ENCODE measurements at regions of chr1 and their contacts with region 1.

Region 1: DNA sequence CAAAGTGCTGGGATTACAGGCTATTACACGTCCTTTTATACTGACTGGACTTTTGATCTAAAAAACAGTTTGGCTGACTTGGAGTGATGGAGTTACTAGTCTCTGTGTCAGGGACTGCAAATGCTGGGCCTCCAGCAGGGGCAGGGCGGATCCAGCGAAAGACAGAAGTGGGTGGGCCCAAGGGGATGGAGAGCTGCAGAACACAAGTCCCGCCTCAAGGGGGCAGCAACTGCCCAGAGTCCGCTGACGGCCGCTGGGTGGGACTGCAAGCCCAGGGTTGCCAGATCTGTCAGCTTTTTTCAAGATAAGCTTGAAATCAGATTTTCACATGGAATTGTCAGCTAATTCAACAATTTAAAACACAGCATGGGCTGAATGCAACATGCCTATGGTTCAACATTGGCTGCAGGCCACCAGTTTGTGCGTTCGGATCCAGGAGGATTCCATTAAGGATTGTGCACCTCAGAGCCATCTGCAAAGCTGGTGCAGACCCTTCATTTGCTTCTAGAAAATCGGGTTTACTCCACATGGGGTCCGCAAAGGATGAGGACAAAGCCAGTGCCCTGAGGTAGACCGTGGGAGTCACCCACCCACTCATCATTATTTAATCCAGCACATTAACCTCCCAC is 10.7 kb downstream of the STMN1 start:
- DNase-seq: peak; percentile 97
- H3K4me3 ChIP-seq: peak overlapping the region in 1 of 8 donors; percentile 19
- H3K27ac ChIP-seq: peak overlapping the region in 2 of 8 donors; percentile 38 to 48
- H3K4me1 ChIP-seq: peaks cover 9 to 38% (median 13%) of the 10 kb centered on the region in 6 donors
- H3K27me3 ChIP-seq: no peaks in the 10 kb centered on the region
- CTCF ChIP-seq: peak; percentile 98 to 100 (median 99)
- POLR2A ChIP-seq: no peak

Region 2: GRCh38 chr1:25997828-25998761 is 102.6 kb after region 1 on chr1 and contains the start of gene PAFAH2:
- intact Hi-C with region 1: loop called (anchors 2 kb)
- DNase-seq: peak; percentile 98
- H3K4me3 ChIP-seq: peak within 1 kb of the TSS; percentile 47 to 81 (median 60)
- H3K27ac ChIP-seq: peak within 1 kb of the TSS; percentile 82 to 96 (median 92)
- H3K4me1 ChIP-seq: peaks cover 15 to 40% (median 27%) of the 10 kb centered on the region in 6 donors
- H3K27me3 ChIP-seq: no peaks in the 10 kb centered on the region
- CTCF ChIP-seq: peak; percentile 98 to 100 (median 100)
- POLR2A ChIP-seq: peak in 2 of 3 donors; percentile 3 to 63
- total RNA-seq, gene PAFAH2: 12.9 to 19.7 (median 13.9) TPM

Region 3: GRCh38 chr1:26035959-26036755 is 140.7 kb after region 1 on chr1:
- intact Hi-C with region 1: no loop called
- DNase-seq: peak; percentile 95
- H3K4me3 ChIP-seq: peak overlapping the region; percentile 69 to 97 (median 84)
- H3K27ac ChIP-seq: peak overlapping the region; percentile 80 to 92 (median 86)
- H3K4me1 ChIP-seq: peaks cover 6 to 22% (median 15%) of the 10 kb centered on the region in 6 donors
- H3K27me3 ChIP-seq: peaks cover 0 to 31% (median under 1%) of the 10 kb centered on the region in 7 donors
- CTCF ChIP-seq: peak; percentile 98 to 100 (median 99)
- POLR2A ChIP-seq: no peak

Region 4: DNA sequence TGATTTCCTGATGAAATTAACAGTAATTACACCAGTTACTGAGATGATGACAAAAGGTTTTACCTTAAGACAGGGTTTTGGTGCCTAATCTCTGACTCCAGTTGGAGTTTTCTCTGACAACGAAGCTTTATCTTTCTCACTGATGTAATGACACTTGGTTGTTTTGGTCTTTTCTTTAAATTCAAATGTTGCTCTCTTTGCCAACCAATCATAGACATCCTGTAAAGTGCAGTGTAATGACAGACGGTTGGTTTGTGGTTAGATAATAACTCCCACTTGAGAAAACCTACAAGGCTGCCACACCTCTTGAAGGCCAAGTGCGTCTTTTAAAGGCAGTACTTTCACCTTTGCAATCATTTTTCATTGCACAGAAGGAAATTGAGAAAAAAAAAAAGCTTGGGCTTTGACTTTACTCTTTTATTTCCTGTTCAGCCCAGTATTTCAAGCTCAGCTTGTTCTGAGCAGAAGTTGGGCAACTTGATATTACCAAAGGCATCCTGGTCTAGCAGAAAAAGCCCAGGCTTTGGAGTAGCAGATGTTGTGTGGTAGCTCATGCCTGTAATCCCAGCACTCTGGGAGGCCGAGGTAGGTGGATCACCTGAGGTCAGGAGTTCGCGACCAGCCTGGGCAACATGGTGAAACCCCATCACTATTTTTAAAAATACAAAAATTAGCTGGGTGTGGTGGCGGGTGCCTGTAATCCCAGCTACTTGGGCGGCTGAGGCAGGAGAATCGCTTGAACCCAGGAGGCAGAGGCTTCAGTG is 231.0 kb after region 1 on chr1:
- intact Hi-C with region 1: no loop called
- DNase-seq: no peak
- H3K4me3 ChIP-seq: peak overlapping the region in 2 of 8 donors; percentile 3 to 44
- H3K27ac ChIP-seq: peak overlapping the region in 7 of 8 donors; percentile 60 to 87 (median 78)
- H3K4me1 ChIP-seq: peaks cover 3 to 71% (median 44%) of the 10 kb centered on the region in 6 donors
- H3K27me3 ChIP-seq: no peaks in the 10 kb centered on the region
- CTCF ChIP-seq: no peak
- POLR2A ChIP-seq: no peak